ENCODE measurements at regions of chr16 and their contacts with region 1.

Region 1: GRCh38 chr16:18969050-18969854 is 14.5 kb upstream of the TMC7 start:
- DNase-seq: peak; percentile 83 to 91 (median 87)
- ATAC-seq: peak; percentile 87 to 94 (median 92)
- H3K4me3 ChIP-seq: peak overlapping the region in 10 of 12 donors; percentile 22 to 57 (median 44)
- H3K27ac ChIP-seq: no peak overlapping the region
- H3K4me1 ChIP-seq: peaks cover 0 to 7% (median 0%) of the 10 kb centered on the region in 12 donors
- H3K27me3 ChIP-seq: no peaks in the 10 kb centered on the region
- CTCF ChIP-seq: peak; percentile 91 to 98 (median 94)
- POLR2A ChIP-seq: no peak

Region 2: GRCh38 chr16:18801197-18801972 is 167.9 kb before region 1 on chr16 and contains the start of gene ARL6IP1:
- intact Hi-C with region 1: loop called in 6 of 10 experiments (anchors 5 to 10 kb)
- DNase-seq: peak; percentile 99 to 100 (median 99)
- ATAC-seq: peak; percentile 98 to 100 (median 99)
- H3K4me3 ChIP-seq: peak within 1 kb of the TSS; percentile 70 to 96 (median 86)
- H3K27ac ChIP-seq: peak within 1 kb of the TSS; percentile 12 to 94 (median 88)
- H3K4me1 ChIP-seq: peaks cover 3 to 74% (median 34%) of the 10 kb centered on the region in 12 donors
- H3K27me3 ChIP-seq: no peaks in the 10 kb centered on the region
- CTCF ChIP-seq: peak; percentile 88 to 99 (median 94)
- POLR2A ChIP-seq: peak; percentile 97 to 99
- total RNA-seq, gene ARL6IP1: 16.5 to 63.2 (median 22.9) TPM

Region 3: DNA sequence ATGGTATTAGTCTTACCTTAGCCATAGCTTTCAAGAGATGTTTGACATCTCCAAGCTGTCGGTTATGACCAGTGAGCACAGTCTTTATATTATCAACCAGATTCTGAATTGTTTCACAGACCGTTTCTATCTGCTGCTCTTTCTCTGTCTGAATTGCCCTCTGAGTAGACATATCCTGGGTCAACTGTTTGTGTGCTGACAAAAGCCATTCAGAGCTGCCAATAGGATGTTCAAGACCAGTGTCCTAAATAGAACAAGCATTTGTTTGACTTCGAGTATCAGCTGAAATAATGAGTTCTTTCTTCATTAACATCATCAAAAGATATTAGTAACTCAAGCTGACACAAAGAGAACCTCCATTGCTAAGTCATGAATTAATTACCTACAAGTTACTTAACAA is 153.0 kb before region 1 on chr16:
- intact Hi-C with region 1: loop called in 1 of 10 experiments (anchors 10 kb)
- DNase-seq: no peak
- ATAC-seq: no peak
- H3K4me3 ChIP-seq: no peak overlapping the region
- H3K27ac ChIP-seq: no peak overlapping the region
- H3K4me1 ChIP-seq: peaks cover 0 to 4% (median 0%) of the 10 kb centered on the region in 12 donors
- H3K27me3 ChIP-seq: no peaks in the 10 kb centered on the region
- CTCF ChIP-seq: no peak
- POLR2A ChIP-seq: no peak

Region 4: DNA sequence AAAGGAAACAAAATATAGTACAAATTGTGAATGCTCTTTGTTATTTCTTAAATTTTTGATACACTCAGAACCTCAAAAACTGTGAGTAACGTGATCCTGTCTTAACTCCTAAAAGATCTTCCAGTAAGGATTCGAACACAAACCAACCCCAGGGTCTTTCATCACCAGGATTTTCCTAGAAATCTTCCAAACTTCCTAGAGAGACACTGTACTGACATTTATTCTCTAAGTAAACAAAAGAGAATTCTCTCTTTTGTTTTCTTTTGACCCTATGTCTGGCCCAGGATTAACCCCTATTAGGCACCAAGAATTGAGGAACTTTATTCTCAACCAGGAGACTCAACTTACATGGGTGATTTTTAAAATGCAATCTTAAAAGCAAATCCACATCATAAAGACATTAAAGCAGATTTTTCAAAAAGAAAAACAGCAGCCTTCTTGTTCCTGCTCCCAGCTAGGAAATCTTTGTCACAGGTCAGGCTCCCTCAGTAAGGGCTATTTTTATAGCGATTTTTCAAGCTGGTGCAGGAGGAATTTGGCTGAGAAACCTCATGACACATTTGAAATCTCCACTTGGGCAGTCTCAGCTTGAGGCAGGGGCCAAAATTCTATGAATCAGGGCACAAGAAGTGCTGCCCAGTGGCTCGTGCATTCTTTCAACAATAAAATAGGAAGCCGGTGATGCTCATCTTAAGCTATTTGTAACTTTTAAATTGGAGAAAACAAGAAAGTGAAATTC is 36.8 kb before region 1 on chr16:
- intact Hi-C with region 1: loop called in 2 of 10 experiments (anchors 5 kb)
- DNase-seq: no peak
- ATAC-seq: peak; percentile 56 to 76 (median 68)
- H3K4me3 ChIP-seq: no peak overlapping the region
- H3K27ac ChIP-seq: peak overlapping the region; percentile 76 to 97 (median 88)
- H3K4me1 ChIP-seq: peaks cover 0 to 16% (median 5%) of the 10 kb centered on the region in 12 donors
- H3K27me3 ChIP-seq: no peaks in the 10 kb centered on the region
- CTCF ChIP-seq: no peak
- POLR2A ChIP-seq: no peak

Region 5: GRCh38 chr16:19853742-19854542 is 884.7 kb after region 1 on chr16:
- intact Hi-C with region 1: no loop called
- DNase-seq: no peak
- ATAC-seq: no peak
- H3K4me3 ChIP-seq: no peak overlapping the region
- H3K27ac ChIP-seq: peak overlapping the region in 1 of 12 donors; percentile 29
- H3K4me1 ChIP-seq: peaks cover 0 to 25% (median 12%) of the 10 kb centered on the region in 12 donors
- H3K27me3 ChIP-seq: no peaks in the 10 kb centered on the region
- CTCF ChIP-seq: no peak
- POLR2A ChIP-seq: no peak